Posterior vena cava (tissue), 2 donors: ENCODE measurements at regions of chr9 and their contacts with region 1.

Region 1: DNA sequence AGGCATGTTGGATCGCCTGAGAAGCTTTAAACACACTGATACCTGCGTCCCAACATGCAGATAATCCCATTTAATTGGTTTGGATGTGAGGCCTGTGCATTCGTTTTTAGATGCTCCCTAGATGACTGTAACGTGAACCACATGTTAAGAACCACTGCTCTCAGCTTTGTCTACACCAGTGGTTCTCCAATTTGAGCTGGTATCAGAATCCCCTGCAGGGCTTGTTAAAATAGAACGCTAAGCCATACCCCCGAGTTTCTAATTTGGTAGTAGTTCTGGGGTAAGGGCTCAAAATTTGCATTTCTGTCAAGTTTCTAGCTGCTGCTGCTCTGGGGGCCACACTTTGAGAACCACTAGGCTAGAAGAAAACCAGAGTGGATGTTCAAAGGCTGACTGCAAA is 74.7 kb downstream of the S1PR3 start:
- DNase-seq: no peak

Region 2: GRCh38 chr9:88706193-88707118 is 359.5 kb before region 1 on chr9:
- intact Hi-C with region 1: loop called in 1 of 2 experiments (anchors 5 kb)
- DNase-seq: no peak

Region 3: DNA sequence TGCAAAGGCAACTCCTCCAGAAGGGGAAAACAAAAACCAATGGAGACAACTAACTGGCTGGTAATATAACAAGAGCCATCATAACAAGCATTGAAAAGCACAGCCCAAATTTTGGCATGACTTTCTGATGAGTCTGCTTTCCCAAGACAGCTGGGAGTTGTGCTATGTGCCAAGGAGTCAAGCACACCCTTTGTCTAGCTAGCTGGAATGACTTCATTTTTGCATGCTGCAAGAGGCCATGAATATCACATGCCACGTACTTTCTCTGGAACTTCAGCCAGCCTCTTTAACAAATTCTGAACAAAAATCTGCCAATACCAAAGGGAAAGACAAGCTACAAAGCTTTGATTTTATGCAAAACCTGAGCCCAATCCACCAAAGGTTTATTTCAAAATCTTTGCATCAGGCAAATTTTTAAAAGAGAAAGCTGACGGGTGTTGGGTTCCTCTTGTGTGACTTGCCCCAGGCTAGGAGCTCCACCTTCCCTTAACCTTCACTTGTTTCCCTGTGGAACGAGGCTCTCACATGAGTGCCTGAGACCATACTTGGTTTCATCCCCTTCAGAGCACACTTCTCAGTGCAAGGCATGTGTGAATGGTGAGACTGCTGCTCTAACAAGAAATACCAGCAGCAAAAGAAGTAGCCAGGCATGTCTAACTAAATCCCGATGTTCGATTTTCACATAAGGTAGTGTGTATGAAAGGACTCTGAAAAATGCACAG is 27.4 kb before region 1 on chr9:
- intact Hi-C with region 1: no loop called
- DNase-seq: no peak